Mammary epithelial cell (primary cell): ENCODE measurements at regions of chr7 and their contacts with region 1.

Region 1: DNA sequence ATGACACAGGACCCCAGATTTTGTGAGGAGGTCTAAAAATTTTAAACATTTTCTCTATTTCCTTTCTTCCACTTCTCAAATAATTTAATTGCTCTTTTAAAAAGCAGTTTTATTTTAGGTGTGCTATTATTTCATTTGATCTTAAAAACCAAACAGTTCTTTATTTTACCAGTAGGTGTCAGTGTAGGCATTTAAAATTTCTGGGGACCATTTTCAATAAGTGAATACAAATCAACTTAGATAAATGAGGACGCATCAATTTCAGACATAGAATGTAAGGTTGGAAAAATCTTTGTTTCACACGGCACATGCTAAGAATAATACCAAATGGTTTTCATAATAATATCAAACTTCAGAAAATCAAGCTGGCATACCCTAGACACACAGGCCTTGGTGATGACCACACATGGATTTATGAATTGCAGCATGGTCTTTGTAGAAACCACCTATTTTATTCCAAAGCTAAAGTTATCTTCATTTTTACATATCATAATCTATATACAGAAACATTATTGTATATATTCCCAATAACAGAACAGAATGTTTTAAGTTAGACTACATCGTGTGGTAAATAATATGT is 127.6 kb upstream of the SLC26A5 start:
- DNase-seq: peak; percentile 15
- H3K4me3 ChIP-seq: no peak overlapping the region
- H3K27ac ChIP-seq: no peak overlapping the region
- H3K4me1 ChIP-seq: no peaks in the 10 kb centered on the region
- H3K27me3 ChIP-seq: no peaks in the 10 kb centered on the region
- CTCF ChIP-seq: peak; percentile 40 to 48

Region 2: DNA sequence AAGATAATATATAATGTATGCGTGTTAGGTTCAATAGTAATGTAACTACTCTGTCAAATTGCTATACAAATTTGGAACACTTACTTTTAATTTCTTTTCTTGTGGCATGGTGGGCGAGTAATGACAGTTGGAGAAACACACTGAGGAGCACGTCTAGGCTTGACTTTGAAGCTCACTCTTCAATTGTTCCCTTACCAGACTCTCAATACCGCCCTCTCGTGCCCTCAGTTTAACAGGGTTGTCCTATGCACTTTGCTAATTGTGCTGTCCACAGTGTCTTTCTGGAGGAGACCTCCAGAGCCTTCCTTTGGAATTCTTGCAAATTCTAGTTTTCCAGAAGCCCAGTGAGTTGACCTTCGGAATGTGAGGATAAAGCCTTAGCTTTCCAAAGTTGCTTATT is 523.1 kb after region 1 on chr7:
- CTCF ChIA-PET with region 1: no interaction called
- dilution Hi-C with region 1: no loop called
- in situ Hi-C with region 1: no loop called
- intact Hi-C with region 1: loop called (anchors 5 kb)
- DNase-seq: peak; percentile 36
- H3K4me3 ChIP-seq: no peak overlapping the region
- H3K27ac ChIP-seq: no peak overlapping the region
- H3K4me1 ChIP-seq: no peaks in the 10 kb centered on the region
- H3K27me3 ChIP-seq: no peaks in the 10 kb centered on the region
- CTCF ChIP-seq: peak; percentile 36 to 60

Region 3: GRCh38 chr7:104137971-104138370 is 564.4 kb after region 1 on chr7:
- CTCF ChIA-PET with region 1: no interaction called
- dilution Hi-C with region 1: no loop called
- in situ Hi-C with region 1: loop called in 1 of 2 experiments (anchors 25 kb)
- intact Hi-C with region 1: no loop called
- DNase-seq: peak; percentile 3
- H3K4me3 ChIP-seq: no peak overlapping the region
- H3K27ac ChIP-seq: no peak overlapping the region
- H3K4me1 ChIP-seq: no peaks in the 10 kb centered on the region
- H3K27me3 ChIP-seq: no peaks in the 10 kb centered on the region
- CTCF ChIP-seq: no peak

Region 4: DNA sequence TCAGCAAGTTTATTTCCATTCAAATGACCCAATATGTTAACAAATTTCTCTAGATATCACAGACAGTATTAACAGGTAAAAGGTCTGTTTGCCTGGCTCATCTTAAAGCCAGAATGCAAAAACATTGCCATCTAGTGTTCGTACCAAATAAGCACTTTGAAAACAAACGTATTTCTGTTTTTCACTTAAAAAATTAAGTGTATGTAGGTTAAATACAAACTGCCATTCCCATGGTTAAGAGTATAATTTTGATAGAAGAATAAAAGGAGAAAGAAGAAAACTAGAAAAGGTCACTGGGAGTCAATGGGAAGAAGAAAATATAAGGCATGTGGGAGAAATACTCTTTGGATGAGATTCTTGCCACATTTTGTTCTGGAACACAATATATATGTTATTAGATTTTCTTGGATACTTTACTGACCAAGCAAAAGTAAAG is 583.3 kb after region 1 on chr7:
- CTCF ChIA-PET with region 1: no interaction called
- dilution Hi-C with region 1: no loop called
- in situ Hi-C with region 1: no loop called
- intact Hi-C with region 1: loop called (anchors 2 kb)
- DNase-seq: peak; percentile 6
- H3K4me3 ChIP-seq: no peak overlapping the region
- H3K27ac ChIP-seq: no peak overlapping the region
- H3K4me1 ChIP-seq: no peaks in the 10 kb centered on the region
- H3K27me3 ChIP-seq: no peaks in the 10 kb centered on the region
- CTCF ChIP-seq: peak; percentile 46 to 62

Region 5: GRCh38 chr7:104179178-104179577 is 605.6 kb after region 1 on chr7:
- CTCF ChIA-PET with region 1: no interaction called
- dilution Hi-C with region 1: no loop called
- in situ Hi-C with region 1: loop called in 1 of 2 experiments (anchors 10 kb)
- intact Hi-C with region 1: no loop called
- DNase-seq: no peak
- H3K4me3 ChIP-seq: no peak overlapping the region
- H3K27ac ChIP-seq: no peak overlapping the region
- H3K4me1 ChIP-seq: no peaks in the 10 kb centered on the region
- H3K27me3 ChIP-seq: no peaks in the 10 kb centered on the region
- CTCF ChIP-seq: no peak